ENCODE measurements at regions of chr19 and their contacts with region 1.

Region 1: DNA sequence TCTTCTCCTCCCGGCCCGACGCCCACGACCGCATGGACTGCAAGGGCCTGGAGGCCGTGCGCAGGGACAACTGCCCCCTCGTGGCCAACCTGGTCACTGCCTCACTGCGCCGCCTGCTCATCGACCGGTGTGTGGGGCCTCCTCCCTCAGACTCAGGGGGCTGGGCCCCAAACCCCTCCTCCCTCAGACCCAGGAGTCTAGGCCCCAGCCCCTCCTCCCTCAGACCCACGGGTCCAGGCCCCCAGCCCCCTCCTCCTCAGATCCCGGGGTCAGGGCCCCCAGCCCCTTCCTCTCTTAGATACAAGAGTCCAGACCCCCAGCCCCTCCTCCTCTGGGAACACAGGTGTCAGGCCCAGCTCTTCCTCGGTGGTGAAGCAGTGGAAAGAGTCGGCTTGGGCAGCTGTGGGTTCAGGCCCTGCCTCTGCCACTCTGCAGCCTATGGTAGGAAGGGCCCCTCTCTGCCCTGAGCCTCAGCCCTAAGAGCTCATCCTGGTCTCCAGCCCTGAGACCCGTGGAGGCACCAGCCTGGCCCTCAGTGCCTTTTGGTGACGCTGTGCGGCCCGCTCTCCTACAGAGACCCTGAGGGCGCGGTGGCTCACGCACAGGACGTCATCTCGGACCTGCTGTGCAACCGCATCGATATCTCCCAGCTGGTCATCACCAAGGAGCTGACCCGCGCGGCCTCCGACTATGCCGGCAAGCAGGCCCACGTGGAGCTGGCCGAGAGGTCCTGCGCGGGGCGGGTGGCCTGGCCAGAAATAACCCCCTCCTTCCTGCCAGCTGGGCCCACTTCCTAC is 3.7 kb upstream of the SPIB start:
- H3K4me3 Mint-ChIP-seq: no peak overlapping the region
- H3K27ac Mint-ChIP-seq: peak overlapping the region; percentile 86
- H3K4me1 Mint-ChIP-seq: peaks cover 49% of the 10 kb centered on the region
- H3K27me3 Mint-ChIP-seq: peaks cover 22% of the 10 kb centered on the region

Region 2: GRCh38 chr19:50368649-50369570 is 46.2 kb before region 1 on chr19:
- intact Hi-C with region 1: loop called (anchors 1 kb)
- H3K4me3 Mint-ChIP-seq: peak overlapping the region; percentile 99
- H3K27ac Mint-ChIP-seq: peak overlapping the region; percentile 93
- H3K4me1 Mint-ChIP-seq: peaks cover 39% of the 10 kb centered on the region
- H3K27me3 Mint-ChIP-seq: peaks cover 3% of the 10 kb centered on the region

Region 3: GRCh38 chr19:50380751-50381151 is 34.3 kb before region 1 on chr19:
- intact Hi-C with region 1: no loop called
- H3K4me3 Mint-ChIP-seq: no peak overlapping the region
- H3K27ac Mint-ChIP-seq: no peak overlapping the region
- H3K4me1 Mint-ChIP-seq: peaks cover 71% of the 10 kb centered on the region
- H3K27me3 Mint-ChIP-seq: no peaks in the 10 kb centered on the region

Region 4: DNA sequence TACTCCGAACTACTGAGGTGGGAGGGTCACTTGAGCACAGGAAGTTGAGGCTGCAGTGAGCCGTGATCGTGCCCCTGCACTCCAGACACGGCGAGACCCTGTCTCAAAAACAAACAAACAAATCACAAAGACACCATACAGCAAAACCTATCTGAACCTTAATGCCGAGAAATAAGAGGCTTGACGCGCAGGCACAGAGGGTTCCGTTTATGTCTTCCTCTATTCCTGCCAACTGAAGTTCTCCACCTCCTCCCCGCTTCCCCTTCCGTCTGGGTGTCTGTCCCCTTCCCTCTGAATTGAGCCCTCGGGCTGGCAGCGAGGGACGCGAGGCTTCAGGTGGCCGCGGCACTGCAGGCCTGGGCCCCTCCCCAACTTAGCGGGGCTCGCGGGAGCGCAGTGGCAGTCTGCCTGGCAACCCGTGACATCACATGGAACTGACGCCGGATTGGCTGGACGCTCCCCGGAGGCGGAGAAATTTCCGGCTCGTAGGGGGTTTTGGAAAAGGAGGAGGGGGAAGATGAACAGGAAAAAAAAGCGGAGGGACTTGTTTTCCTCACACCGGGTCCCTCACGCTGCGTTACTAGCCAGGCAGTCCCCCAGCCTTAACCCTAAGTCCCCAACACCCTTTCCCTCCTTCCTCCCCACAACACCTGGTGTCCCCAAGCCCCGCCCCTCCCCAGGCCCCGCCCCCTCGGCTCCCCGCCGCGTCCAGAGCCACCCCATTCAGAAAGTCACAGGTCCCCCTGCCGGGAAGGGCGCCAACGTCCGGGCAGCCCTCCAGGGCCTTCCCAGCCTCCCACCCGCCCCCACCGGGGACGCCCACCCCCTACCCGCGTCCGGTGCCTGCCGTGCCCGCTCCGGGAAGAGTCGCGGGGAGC is 16.5 kb after region 1 on chr19:
- intact Hi-C with region 1: loop called (anchors 1 kb)
- H3K4me3 Mint-ChIP-seq: peak overlapping the region; percentile 80
- H3K27ac Mint-ChIP-seq: peak overlapping the region; percentile 99
- H3K4me1 Mint-ChIP-seq: peaks cover 59% of the 10 kb centered on the region
- H3K27me3 Mint-ChIP-seq: peaks cover 29% of the 10 kb centered on the region

Region 5: GRCh38 chr19:50461066-50461875 is 46.2 kb after region 1 on chr19:
- intact Hi-C with region 1: loop called (anchors 5 kb)
- H3K4me3 Mint-ChIP-seq: no peak overlapping the region
- H3K27ac Mint-ChIP-seq: no peak overlapping the region
- H3K4me1 Mint-ChIP-seq: peaks cover 8% of the 10 kb centered on the region
- H3K27me3 Mint-ChIP-seq: peaks cover 48% of the 10 kb centered on the region